ENCODE measurements at regions of chr4 and their contacts with region 1.

Region 1: GRCh38 chr4:70651864-70652506 is 14.3 kb downstream of the JCHAIN start:
- DNase-seq: no peak
- ATAC-seq: peak; percentile 65
- H3K4me3 Mint-ChIP-seq: no peak overlapping the region
- H3K27ac Mint-ChIP-seq: no peak overlapping the region
- H3K4me1 Mint-ChIP-seq: peaks cover 4% of the 10 kb centered on the region
- H3K27me3 Mint-ChIP-seq: no peaks in the 10 kb centered on the region
- CTCF ChIP-seq: peak; percentile 62

Region 2: GRCh38 chr4:70629469-70630090 is 22.4 kb before region 1 on chr4:
- CTCF ChIA-PET with region 1: interaction called, 11 read pairs
- POLR2A ChIA-PET with region 1: interaction called, 3 read pairs
- intact Hi-C with region 1: no loop called
- DNase-seq: no peak
- ATAC-seq: peak; percentile 45
- H3K4me3 Mint-ChIP-seq: no peak overlapping the region
- H3K27ac Mint-ChIP-seq: no peak overlapping the region
- H3K4me1 Mint-ChIP-seq: peaks cover 6% of the 10 kb centered on the region
- H3K27me3 Mint-ChIP-seq: peaks cover 1% of the 10 kb centered on the region
- CTCF ChIP-seq: no peak

Region 3: DNA sequence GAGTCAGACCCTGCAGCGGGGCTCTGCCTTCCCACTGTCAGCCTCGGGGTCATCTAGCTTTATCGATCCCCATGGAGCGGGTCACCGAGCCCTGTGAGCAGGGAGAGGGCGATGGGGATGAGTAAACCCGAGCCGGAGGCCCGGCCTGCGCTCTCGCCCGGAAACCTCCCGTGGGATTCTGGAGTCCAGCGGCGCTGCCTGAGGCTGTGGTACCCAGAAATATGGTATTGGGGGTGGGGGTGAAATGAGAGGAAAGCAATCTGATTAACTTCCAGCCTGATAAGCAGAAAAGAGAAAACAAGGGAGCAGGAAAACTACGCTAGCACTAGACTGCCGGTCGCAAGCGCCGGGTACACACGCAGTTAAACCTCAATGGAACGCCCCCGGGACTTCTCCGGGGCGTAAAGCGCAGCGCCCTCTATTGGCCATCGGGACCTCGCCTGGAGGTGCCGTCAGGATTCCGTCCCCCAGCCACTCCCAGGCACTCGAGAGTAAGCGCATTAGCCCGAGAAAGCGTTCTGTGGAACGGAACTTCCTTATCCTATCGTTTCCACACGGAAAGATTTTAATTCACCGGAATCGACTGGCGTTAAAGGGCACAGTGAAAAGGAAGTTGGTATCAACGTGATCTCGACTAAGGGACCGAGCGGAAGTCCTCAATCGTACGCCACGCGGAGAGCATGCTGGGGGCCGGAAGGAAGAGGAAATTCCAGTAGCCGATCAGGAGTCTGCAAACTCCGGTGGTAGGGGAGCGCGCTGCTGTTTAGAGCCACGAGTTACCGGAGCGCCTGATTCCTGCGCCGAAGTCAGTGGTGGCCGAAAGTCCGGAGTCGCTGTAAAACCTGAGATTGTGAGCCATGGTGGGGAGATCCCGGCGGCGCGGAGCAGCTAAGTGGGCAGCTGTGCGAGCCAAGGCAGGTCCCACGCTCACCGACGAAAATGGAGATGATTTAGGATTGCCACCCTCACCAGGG is 36.1 kb after region 1 on chr4 and contains the start of gene UTP3:
- CTCF ChIA-PET with region 1: interaction called, 9 read pairs
- POLR2A ChIA-PET with region 1: interaction called, 6 read pairs
- intact Hi-C with region 1: loop called (anchors 5 kb)
- DNase-seq: peak; percentile 95
- ATAC-seq: peak; percentile 92
- H3K4me3 Mint-ChIP-seq: peak within 1 kb of the TSS; percentile 97
- H3K27ac Mint-ChIP-seq: peak within 1 kb of the TSS; percentile 94
- H3K4me1 Mint-ChIP-seq: peaks cover 29% of the 10 kb centered on the region
- H3K27me3 Mint-ChIP-seq: no peaks in the 10 kb centered on the region
- CTCF ChIP-seq: peak; percentile 97
- total RNA-seq, gene UTP3: 31.0 to 33.5 TPM